ENCODE measurements at regions of chr20 and their contacts with region 1.

Region 1: DNA sequence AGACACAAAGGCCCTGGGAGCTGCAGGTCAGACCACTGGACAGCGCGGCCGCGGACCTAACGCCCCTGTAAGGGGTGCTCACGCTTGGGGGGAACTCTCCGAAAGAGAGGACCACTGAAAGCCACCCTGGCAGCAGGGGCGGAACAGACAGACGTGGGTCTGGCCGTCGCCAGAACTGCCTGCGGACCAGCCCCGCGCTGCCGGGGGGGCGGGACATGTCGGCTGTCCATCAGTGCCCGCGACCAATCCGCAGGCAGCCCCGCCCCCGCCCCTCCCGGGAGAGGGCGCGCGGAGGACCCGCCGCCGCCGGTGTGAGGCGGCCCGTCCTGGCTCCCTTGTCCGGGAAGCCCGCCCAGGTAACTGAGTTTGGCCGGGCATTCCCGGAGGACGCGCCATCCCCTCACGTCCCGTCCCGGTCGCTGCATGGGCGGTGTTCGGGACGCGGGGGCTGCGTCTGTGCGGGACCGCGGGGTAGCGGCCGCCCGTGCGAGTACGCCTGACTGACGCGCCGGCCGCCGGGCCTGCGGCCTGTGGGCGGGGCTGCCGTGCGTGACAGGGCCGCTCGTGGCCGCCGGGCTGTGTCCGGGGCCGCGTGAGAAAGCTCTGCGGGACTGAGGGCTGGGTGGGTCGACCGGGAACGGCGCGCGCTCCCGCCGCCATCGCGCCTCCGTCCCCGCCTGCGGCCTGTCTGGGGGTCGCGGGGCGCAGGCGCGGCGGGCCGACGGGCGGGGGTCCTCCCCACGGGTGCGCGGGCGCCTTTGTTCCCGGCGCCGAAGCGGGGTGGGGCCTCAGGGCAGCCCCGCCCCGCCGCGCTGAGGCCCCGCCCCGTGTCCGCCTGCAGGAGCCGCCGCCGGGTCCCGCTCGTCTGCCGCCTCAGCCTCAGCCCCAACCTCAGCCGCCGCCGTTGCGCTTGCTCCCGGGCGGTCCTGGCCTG is at the start of gene PLCG1:
- DNase-seq: peak; percentile 74 to 89 (median 82)
- ATAC-seq: peak; percentile 84
- H3K4me3 ChIP-seq: peak within 1 kb of the TSS; percentile 82
- H3K4me3 Mint-ChIP-seq: peak within 1 kb of the TSS; percentile 89 to 98 (median 95)
- H3K27ac ChIP-seq: peak within 1 kb of the TSS; percentile 91
- H3K27ac Mint-ChIP-seq: peak within 1 kb of the TSS; percentile 86 to 100 (median 96)
- H3K4me1 ChIP-seq: peaks cover 32 to 40% of the 10 kb centered on the region in 2 donors
- H3K4me1 Mint-ChIP-seq: peaks cover 48 to 66% (median 61%) of the 10 kb centered on the region in 7 donors
- H3K27me3 ChIP-seq: no peaks in the 10 kb centered on the region
- H3K27me3 Mint-ChIP-seq: no peaks in the 10 kb centered on the region
- total RNA-seq, gene PLCG1: 343 to 559 (median 418) TPM

Region 2: GRCh38 chr20:40646361-40646760 is 490.6 kb before region 1 on chr20:
- CTCF ChIA-PET with region 1: no interaction called
- POLR2A ChIA-PET with region 1: no interaction called
- intact Hi-C with region 1: no loop called
- DNase-seq: no peak
- ATAC-seq: no peak
- H3K4me3 ChIP-seq: no peak overlapping the region
- H3K4me3 Mint-ChIP-seq: no peak overlapping the region
- H3K27ac ChIP-seq: no peak overlapping the region
- H3K27ac Mint-ChIP-seq: no peak overlapping the region
- H3K4me1 ChIP-seq: no peaks in the 10 kb centered on the region
- H3K4me1 Mint-ChIP-seq: no peaks in the 10 kb centered on the region
- H3K27me3 ChIP-seq: no peaks in the 10 kb centered on the region
- H3K27me3 Mint-ChIP-seq: peaks cover 0 to 23% (median 10%) of the 10 kb centered on the region in 5 donors

Region 3: DNA sequence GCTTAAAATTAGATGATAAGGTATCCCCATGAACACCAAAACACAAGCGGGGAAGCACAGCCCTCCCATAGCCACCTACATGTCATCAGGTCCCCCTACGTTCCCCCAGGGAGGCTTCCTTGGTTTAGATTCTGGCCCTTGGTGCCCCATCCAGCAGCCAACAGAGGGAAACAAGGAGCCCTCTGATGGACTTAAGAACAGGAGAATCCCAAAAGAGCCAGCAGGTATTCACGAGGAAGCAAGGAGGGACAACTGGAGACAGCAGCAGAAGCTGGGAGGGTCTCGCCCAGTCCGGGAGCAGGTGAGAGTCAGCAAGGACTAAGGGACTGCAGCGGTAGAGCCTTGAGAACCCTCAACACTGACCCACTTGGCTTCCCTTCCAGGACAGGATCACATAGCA is 166.7 kb before region 1 on chr20:
- CTCF ChIA-PET with region 1: interaction called, 4 read pairs
- POLR2A ChIA-PET with region 1: no interaction called
- intact Hi-C with region 1: loop called in 1 of 2 experiments (anchors 1 kb)
- DNase-seq: no peak
- ATAC-seq: no peak
- H3K4me3 ChIP-seq: no peak overlapping the region
- H3K4me3 Mint-ChIP-seq: no peak overlapping the region
- H3K27ac ChIP-seq: no peak overlapping the region
- H3K27ac Mint-ChIP-seq: no peak overlapping the region
- H3K4me1 ChIP-seq: no peaks in the 10 kb centered on the region
- H3K4me1 Mint-ChIP-seq: peaks cover 5 to 12% (median 9%) of the 10 kb centered on the region in 7 donors
- H3K27me3 ChIP-seq: no peaks in the 10 kb centered on the region
- H3K27me3 Mint-ChIP-seq: peaks cover 0 to 49% (median 8%) of the 10 kb centered on the region in 5 donors

Region 4: DNA sequence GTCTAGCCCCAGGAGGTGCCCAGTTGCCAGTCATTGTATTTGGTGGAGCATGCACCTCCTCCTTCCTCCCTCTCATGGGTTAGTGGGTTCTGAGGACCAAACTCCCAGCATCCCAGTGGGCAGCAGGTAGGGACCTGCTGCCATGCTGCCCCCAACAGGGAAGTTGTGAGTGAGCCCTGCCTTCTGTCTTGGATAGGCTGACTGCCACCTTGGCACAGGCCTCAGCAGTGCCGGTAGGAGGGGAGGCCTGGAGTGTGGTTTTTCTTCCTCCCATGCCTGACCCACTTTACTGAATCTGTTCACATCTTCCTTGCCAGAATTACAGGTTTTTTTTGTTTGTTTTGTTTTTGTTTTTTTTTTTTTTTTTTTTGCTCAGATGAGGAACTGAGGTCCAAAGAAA is 24.9 kb after region 1 on chr20:
- CTCF ChIA-PET with region 1: interaction called, 236 read pairs
- POLR2A ChIA-PET with region 1: interaction called, 604 read pairs
- intact Hi-C with region 1: loop called (anchors 1 kb)
- DNase-seq: no peak
- ATAC-seq: no peak
- H3K4me3 ChIP-seq: no peak overlapping the region
- H3K4me3 Mint-ChIP-seq: peak overlapping the region in 9 of 10 donors; percentile 25 to 67 (median 39)
- H3K27ac ChIP-seq: peak overlapping the region; percentile 82
- H3K27ac Mint-ChIP-seq: peak overlapping the region; percentile 79 to 100 (median 94)
- H3K4me1 ChIP-seq: peaks cover 59 to 61% of the 10 kb centered on the region in 2 donors
- H3K4me1 Mint-ChIP-seq: peaks cover 60 to 81% (median 76%) of the 10 kb centered on the region in 7 donors
- H3K27me3 ChIP-seq: no peaks in the 10 kb centered on the region
- H3K27me3 Mint-ChIP-seq: no peaks in the 10 kb centered on the region

Region 5: GRCh38 chr20:41222296-41222695 is 85.3 kb after region 1 on chr20:
- CTCF ChIA-PET with region 1: interaction called, 30 read pairs
- POLR2A ChIA-PET with region 1: interaction called, 3 read pairs
- intact Hi-C with region 1: no loop called
- DNase-seq: no peak
- ATAC-seq: no peak
- H3K4me3 ChIP-seq: no peak overlapping the region
- H3K4me3 Mint-ChIP-seq: no peak overlapping the region
- H3K27ac ChIP-seq: no peak overlapping the region
- H3K27ac Mint-ChIP-seq: peak overlapping the region in 1 of 9 donors; percentile 65
- H3K4me1 ChIP-seq: no peaks in the 10 kb centered on the region
- H3K4me1 Mint-ChIP-seq: peaks cover 0 to 9% (median 0%) of the 10 kb centered on the region in 7 donors
- H3K27me3 ChIP-seq: no peaks in the 10 kb centered on the region
- H3K27me3 Mint-ChIP-seq: no peaks in the 10 kb centered on the region

Region 6: DNA sequence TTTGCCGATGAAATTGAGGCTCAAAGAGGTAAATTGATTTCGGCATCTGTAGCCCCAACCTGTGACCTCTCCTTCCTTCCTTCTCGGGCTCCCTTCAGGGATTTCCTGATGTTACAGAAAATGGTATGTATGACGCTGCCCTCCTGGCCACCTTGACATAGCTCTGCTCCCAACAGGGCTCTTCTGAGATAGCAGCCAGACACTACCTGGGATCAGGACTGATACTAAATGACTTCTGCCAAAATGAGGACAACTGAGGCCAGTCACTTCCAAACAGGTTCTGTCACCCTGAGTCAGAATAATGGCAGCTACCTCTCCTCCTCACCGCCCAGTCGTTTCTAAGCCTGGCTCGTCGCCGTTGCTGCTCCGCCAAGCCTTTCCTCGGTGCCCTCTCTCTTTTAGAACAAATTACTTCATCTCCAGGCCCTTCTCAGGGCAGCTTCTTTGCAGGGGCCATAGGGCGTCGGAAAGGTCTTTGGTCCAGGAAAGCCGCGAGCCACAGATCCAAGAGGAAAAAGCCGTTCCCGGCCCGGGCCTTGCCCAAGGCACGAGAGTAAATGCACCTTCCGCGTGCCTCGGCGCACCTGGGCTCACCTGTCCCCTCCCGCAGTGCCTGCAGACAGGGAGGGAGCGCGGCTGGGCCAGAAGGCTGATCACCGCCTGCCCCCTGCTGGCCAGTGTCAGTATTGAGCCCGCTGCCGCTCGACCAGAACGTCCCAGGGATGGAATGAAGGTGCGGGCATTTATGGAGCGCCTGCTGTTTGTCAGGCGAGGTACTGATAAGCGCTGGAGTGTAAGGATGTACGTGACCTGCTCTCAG is 202.8 kb after region 1 on chr20:
- CTCF ChIA-PET with region 1: interaction called, 21 read pairs
- POLR2A ChIA-PET with region 1: no interaction called
- intact Hi-C with region 1: loop called (anchors 1 kb)
- DNase-seq: peak; percentile 72 to 92 (median 83)
- ATAC-seq: peak; percentile 97
- H3K4me3 ChIP-seq: peak overlapping the region; percentile 28
- H3K4me3 Mint-ChIP-seq: peak overlapping the region; percentile 72 to 85 (median 82)
- H3K27ac ChIP-seq: no peak overlapping the region
- H3K27ac Mint-ChIP-seq: peak overlapping the region in 5 of 9 donors; percentile 47 to 86 (median 67)
- H3K4me1 ChIP-seq: peaks cover 0 to 3% of the 10 kb centered on the region in 2 donors
- H3K4me1 Mint-ChIP-seq: peaks cover 8 to 15% (median 9%) of the 10 kb centered on the region in 7 donors
- H3K27me3 ChIP-seq: no peaks in the 10 kb centered on the region
- H3K27me3 Mint-ChIP-seq: peaks cover 0 to 12% (median 3%) of the 10 kb centered on the region in 5 donors

Region 7: GRCh38 chr20:41617931-41618806 is 481.2 kb after region 1 on chr20 and contains the start of gene CHD6:
- CTCF ChIA-PET with region 1: no interaction called
- POLR2A ChIA-PET with region 1: interaction called, 3 read pairs
- intact Hi-C with region 1: loop called (anchors 5 kb)
- DNase-seq: peak; percentile 96 to 100 (median 99)
- ATAC-seq: peak; percentile 96
- H3K4me3 ChIP-seq: peak within 1 kb of the TSS; percentile 66
- H3K4me3 Mint-ChIP-seq: peak within 1 kb of the TSS; percentile 85 to 97 (median 94)
- H3K27ac ChIP-seq: peak within 1 kb of the TSS; percentile 80
- H3K27ac Mint-ChIP-seq: peak within 1 kb of the TSS; percentile 86 to 95 (median 91)
- H3K4me1 ChIP-seq: peaks cover 21 to 31% of the 10 kb centered on the region in 2 donors
- H3K4me1 Mint-ChIP-seq: peaks cover 31 to 54% (median 53%) of the 10 kb centered on the region in 7 donors
- H3K27me3 ChIP-seq: no peaks in the 10 kb centered on the region
- H3K27me3 Mint-ChIP-seq: peaks cover 0 to 16% (median 0%) of the 10 kb centered on the region in 5 donors
- total RNA-seq, gene CHD6: 46.3 to 132 (median 109) TPM